Activated CD4-positive, alpha-beta memory T cell treated with anti-CD3 and anti-CD28 coated beads for 36 hours (primary cell): ENCODE measurements at regions of chr3 and their contacts with region 1.

Region 1: DNA sequence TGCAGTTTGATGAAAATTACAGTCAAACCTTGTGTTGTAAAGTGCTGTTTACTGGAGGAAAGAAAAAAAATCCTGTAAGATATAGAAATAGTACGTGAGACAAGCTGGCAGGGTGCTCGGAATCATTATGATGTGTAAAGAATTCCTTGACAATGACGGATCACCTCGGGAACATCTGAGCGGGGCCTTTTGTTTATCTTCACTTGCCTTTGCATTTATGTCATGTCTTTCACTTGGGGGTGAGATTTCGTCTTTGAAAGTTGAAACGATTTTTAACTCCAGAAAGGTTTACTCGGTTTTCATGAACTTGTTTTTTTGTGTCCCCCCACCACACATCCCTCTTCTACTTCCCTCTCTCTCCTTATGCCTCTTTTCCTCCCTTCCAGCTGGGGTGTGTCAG is 128.3 kb upstream of the VEPH1 start:
- DNase-seq: no peak
- H3K4me3 Mint-ChIP-seq: no peak overlapping the region
- H3K27ac Mint-ChIP-seq: no peak overlapping the region
- H3K4me1 Mint-ChIP-seq: no peaks in the 10 kb centered on the region
- H3K27me3 Mint-ChIP-seq: peaks cover 8% of the 10 kb centered on the region

Region 2: DNA sequence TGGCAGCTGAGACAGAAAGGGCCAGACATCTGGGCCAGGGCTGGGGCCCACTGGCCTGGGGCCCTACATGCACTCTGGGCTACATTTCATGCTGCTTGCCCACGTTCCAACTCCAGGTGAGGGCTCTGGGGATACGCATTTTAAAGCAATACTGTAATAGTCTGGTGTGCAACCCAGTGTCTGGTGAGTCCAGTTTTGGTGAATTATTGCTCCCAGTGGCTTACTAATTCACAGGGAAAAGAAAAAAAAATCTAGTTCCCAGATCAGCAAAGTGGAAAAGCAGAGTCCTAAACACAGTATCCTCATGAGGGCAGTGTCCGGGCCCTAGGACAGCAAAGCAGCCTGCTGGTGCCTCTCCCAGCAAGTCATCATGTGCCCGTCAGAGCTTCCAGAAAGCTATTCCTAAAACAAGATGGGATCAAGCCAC is 553.9 kb before region 1 on chr3:
- CTCF ChIA-PET with region 1: no interaction called
- POLR2A ChIA-PET with region 1: no interaction called
- intact Hi-C with region 1: no loop called
- DNase-seq: no peak
- H3K4me3 Mint-ChIP-seq: no peak overlapping the region
- H3K27ac Mint-ChIP-seq: no peak overlapping the region
- H3K4me1 Mint-ChIP-seq: peaks cover 28% of the 10 kb centered on the region
- H3K27me3 Mint-ChIP-seq: no peaks in the 10 kb centered on the region

Region 3: DNA sequence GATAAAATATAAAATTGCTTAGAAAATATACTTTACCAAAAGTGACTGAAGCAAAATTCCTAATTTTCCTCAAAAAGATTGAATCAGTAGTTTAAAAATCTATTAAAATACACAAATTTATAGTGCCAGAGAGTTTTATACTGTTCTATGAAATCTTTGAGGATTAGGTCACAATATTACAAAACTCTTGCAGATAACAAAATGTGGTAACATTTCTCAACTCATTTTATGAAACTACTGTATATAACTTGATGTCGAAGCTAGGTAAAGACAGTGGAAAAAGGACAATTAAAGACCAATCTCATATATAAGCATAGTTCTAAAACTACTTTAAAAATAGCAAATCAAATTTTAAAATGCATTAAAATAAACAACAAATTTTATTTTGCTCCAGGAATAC is 144.1 kb before region 1 on chr3:
- CTCF ChIA-PET with region 1: no interaction called
- POLR2A ChIA-PET with region 1: no interaction called
- intact Hi-C with region 1: no loop called
- DNase-seq: no peak
- H3K4me3 Mint-ChIP-seq: no peak overlapping the region
- H3K27ac Mint-ChIP-seq: no peak overlapping the region
- H3K4me1 Mint-ChIP-seq: no peaks in the 10 kb centered on the region
- H3K27me3 Mint-ChIP-seq: peaks cover 9% of the 10 kb centered on the region

Region 4: GRCh38 chr3:157606011-157606851 is 25.2 kb before region 1 on chr3:
- CTCF ChIA-PET with region 1: interaction called, 10 read pairs
- POLR2A ChIA-PET with region 1: no interaction called
- intact Hi-C with region 1: no loop called
- DNase-seq: peak; percentile 71
- H3K4me3 Mint-ChIP-seq: no peak overlapping the region
- H3K27ac Mint-ChIP-seq: no peak overlapping the region
- H3K4me1 Mint-ChIP-seq: peaks cover 3% of the 10 kb centered on the region
- H3K27me3 Mint-ChIP-seq: peaks cover 5% of the 10 kb centered on the region

Region 5: DNA sequence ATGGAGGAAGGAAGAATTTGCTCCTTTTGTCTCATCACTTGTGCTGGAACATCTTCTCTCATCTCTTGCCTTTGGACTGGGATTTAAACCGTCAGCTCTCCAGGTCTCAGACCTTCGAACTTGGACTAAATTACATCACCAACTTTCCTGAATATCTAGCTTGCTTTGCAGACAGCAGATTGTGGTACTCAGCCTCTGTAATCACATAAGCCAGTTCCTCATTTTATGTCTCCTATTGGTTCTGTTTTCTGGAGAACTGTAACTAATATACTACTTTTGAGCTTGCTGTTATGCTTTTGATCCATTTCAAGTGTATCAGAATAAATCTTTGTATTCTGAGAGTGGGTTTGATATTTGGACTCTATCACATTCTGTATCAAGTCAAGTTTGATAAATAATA is 36.0 kb after region 1 on chr3:
- CTCF ChIA-PET with region 1: no interaction called
- POLR2A ChIA-PET with region 1: no interaction called
- intact Hi-C with region 1: no loop called
- DNase-seq: no peak
- H3K4me3 Mint-ChIP-seq: no peak overlapping the region
- H3K27ac Mint-ChIP-seq: no peak overlapping the region
- H3K4me1 Mint-ChIP-seq: no peaks in the 10 kb centered on the region
- H3K27me3 Mint-ChIP-seq: peaks cover 3% of the 10 kb centered on the region